Mammary epithelial cell (primary cell): ENCODE measurements at regions of chr10 and their contacts with region 1.

Region 1: DNA sequence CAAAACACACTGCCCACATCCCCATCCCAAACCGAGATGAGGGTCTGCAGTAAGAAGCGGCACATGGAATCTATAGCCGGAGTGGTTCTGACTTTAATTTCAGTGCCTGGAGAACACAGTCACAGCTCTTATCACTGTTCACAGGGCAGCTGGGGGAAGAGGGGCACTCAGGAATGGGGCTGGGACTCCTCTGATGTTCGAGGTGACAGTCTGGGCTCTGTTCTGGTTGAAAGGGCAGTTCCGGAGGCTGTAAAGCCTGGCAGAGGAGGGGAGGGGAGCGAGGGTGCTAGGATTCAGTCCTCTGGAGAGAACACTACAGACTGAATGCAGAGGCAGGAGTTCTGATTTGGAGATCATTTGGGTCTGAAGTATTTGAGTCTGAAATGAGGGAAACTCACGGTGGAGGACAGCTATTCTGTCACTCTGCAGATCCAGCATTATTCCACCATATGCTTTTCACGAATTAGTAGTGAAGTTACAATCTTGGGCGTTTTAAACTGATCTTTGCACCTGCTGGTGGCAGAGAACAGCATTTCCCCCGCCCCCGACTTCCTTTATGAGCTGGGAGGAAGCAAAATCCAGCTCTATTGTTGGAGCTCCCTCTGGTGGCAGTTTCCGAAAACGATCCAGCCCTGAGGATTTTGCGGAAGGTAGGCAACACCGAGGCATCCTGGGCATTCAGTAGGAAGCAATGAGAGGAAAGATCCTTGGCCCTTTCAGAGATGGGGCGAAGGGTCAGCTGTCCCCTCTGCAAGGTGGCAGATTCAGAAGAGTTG is 22.7 kb upstream of the KCNK18 start:
- DNase-seq: peak; percentile 77
- H3K4me3 ChIP-seq: peak overlapping the region; percentile 43 to 51 (median 48)
- H3K27ac ChIP-seq: no peak overlapping the region
- H3K4me1 ChIP-seq: peaks cover 12% of the 10 kb centered on the region
- H3K27me3 ChIP-seq: peaks cover 8% of the 10 kb centered on the region
- CTCF ChIP-seq: peak; percentile 94 to 95

Region 2: DNA sequence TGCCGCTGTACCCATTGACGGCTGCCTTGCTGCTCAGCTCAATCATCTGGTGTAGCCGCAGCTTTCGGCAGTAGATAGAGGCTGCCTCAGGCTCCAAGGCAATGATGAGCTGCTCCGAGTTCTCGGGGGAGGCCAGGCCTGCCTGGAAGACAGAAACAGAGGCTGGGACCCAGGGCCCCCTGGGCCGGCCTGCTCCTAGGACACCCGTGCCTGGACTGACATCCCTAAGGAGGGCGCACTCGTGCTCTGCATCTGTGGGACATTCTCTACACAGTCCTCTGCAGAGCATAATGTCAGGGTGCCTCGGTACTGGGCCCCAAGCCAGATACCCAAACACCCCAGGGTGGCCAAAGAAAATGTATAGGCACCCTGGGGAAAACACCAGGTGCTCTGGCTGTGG is 490.8 kb before region 1 on chr10:
- CTCF ChIA-PET with region 1: no interaction called
- dilution Hi-C with region 1: loop called (anchors 10 kb)
- in situ Hi-C with region 1: loop called (anchors 10 to 25 kb)
- intact Hi-C with region 1: loop called (anchors 2 kb)
- DNase-seq: no peak
- H3K4me3 ChIP-seq: no peak overlapping the region
- H3K27ac ChIP-seq: no peak overlapping the region
- H3K4me1 ChIP-seq: no peaks in the 10 kb centered on the region
- H3K27me3 ChIP-seq: no peaks in the 10 kb centered on the region
- CTCF ChIP-seq: no peak

Region 3: DNA sequence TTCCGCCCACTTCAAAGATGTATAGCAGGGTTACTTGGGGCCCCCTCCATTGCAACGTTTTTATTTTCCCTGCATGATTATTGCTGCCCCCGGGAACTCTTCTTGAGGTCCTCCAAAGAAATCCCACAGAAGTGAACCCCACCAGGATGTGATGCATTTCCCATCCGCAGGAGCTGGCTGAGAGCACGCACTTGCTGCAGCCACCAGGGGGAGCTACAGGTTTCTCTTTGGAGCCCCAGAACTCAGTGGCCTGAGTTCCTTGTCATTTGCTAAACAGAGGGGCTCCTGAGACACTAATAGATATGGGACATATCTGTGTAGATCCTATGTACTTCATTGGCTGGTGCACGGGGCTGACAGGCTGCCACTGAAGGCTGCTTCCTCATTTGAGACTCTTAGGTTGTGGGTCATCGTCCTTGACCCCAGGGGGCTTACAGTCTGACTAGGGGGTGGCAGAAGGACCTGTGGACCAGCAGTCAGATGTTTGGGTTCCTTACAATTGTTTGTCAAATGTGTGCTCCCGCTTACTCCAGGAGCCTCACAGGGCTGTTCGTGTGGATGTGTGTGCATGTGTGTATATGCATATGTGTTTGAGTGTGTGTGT is 377.6 kb before region 1 on chr10:
- CTCF ChIA-PET with region 1: interaction called, 9 read pairs
- dilution Hi-C with region 1: no loop called
- in situ Hi-C with region 1: loop called in 1 of 2 experiments (anchors 5 kb)
- intact Hi-C with region 1: loop called (anchors 1 kb)
- DNase-seq: peak; percentile 40
- H3K4me3 ChIP-seq: no peak overlapping the region
- H3K27ac ChIP-seq: no peak overlapping the region
- H3K4me1 ChIP-seq: no peaks in the 10 kb centered on the region
- H3K27me3 ChIP-seq: no peaks in the 10 kb centered on the region
- CTCF ChIP-seq: peak; percentile 89 to 96

Region 4: GRCh38 chr10:116809483-116810119 is 365.0 kb before region 1 on chr10:
- CTCF ChIA-PET with region 1: no interaction called
- dilution Hi-C with region 1: no loop called
- in situ Hi-C with region 1: loop called in 1 of 2 experiments (anchors 5 kb)
- intact Hi-C with region 1: no loop called
- DNase-seq: peak; percentile 34
- H3K4me3 ChIP-seq: peak overlapping the region; percentile 40 to 47 (median 41)
- H3K27ac ChIP-seq: no peak overlapping the region
- H3K4me1 ChIP-seq: peaks cover 4% of the 10 kb centered on the region
- H3K27me3 ChIP-seq: no peaks in the 10 kb centered on the region
- CTCF ChIP-seq: peak; percentile 50 to 60

Region 5: DNA sequence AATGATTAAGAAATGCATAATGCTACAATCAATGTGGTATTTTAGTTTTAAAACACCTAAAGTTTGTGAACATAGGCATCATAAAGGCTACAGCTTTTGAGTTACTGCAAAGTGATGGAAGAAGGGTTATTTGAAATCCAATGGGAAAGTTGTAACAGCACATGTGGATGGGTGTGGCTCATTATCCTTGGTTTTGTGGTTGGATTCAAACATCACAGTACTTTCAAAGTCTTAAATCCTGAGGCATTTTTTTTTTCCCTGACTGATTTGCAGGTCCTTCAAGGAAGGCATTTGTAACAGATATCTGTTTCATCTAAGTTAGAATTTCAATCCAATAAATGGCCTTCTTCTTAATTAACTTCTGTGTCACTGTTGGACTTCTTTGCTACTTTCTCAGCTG is 159.8 kb before region 1 on chr10:
- CTCF ChIA-PET with region 1: no interaction called
- dilution Hi-C with region 1: no loop called
- in situ Hi-C with region 1: no loop called
- intact Hi-C with region 1: no loop called
- DNase-seq: no peak
- H3K4me3 ChIP-seq: no peak overlapping the region
- H3K27ac ChIP-seq: no peak overlapping the region
- H3K4me1 ChIP-seq: no peaks in the 10 kb centered on the region
- H3K27me3 ChIP-seq: no peaks in the 10 kb centered on the region
- CTCF ChIP-seq: no peak